ENCODE measurements at regions of chr11 and their contacts with region 1.

Region 1: DNA sequence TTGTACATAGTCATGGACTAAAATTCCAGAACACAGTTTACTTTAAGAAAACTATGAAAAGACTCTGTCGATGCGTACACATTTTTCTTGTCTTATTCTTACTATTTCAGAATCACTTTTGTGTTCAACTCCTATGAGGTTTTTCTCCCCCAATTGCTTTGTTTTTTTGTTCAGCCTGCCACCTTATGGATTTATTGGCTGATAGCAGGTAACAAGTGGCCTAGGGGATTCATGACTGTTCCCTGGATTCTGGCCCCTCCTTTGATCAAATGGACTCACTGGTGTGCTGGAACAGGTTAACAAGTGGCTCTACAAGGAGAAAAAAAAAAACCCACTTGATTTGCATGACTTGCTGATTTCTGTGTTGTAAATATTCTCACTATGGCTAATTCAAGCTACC is 10.6 kb downstream of the MMP20 start:
- DNase-seq: no peak
- H3K4me3 Mint-ChIP-seq: no peak overlapping the region
- H3K27ac Mint-ChIP-seq: no peak overlapping the region
- H3K4me1 Mint-ChIP-seq: peaks cover 13% of the 10 kb centered on the region
- H3K27me3 Mint-ChIP-seq: no peaks in the 10 kb centered on the region

Region 2: DNA sequence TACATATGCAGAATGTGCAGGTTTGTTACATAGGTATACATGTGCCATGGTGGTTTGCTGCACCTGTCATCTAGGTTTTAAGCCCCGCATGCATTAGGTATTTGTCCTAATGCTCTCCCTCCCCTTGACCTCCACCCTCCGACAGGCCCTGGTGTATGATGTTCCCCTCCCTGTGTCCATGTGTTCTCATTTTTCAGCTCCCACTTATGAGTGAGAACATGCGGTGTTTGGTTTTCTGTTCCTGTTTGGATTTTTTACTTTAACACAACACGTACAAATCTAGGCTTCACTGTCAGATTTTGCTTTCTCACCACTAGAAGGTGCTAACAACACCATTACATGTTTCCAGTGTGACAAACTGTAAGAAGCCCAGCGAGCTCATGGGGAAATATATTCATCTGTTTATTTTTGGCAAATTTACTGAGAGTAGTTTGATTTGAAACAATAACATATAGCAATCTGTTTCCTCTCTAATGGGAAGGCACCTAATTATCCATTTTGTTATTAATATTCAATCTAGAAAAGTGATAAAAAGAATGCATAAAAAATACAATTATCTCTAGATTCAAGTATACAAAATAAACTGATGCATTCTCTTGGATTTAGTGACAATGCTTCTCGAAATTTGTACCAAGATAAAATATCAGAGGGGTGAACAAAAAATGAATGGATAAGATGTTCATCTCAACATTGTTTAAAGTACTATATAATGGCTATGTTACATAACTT is 320.4 kb before region 1 on chr11:
- CTCF ChIA-PET with region 1: interaction called, 18 read pairs
- intact Hi-C with region 1: no loop called
- DNase-seq: peak; percentile 35
- H3K4me3 Mint-ChIP-seq: peak overlapping the region; percentile 74
- H3K27ac Mint-ChIP-seq: peak overlapping the region; percentile 85
- H3K4me1 Mint-ChIP-seq: peaks cover 21% of the 10 kb centered on the region
- H3K27me3 Mint-ChIP-seq: no peaks in the 10 kb centered on the region

Region 3: GRCh38 chr11:102367364-102367763 is 247.1 kb before region 1 on chr11:
- CTCF ChIA-PET with region 1: interaction called, 5 read pairs
- intact Hi-C with region 1: loop called (anchors 1 kb)
- DNase-seq: no peak
- H3K4me3 Mint-ChIP-seq: no peak overlapping the region
- H3K27ac Mint-ChIP-seq: peak overlapping the region; percentile 1
- H3K4me1 Mint-ChIP-seq: peaks cover 34% of the 10 kb centered on the region
- H3K27me3 Mint-ChIP-seq: no peaks in the 10 kb centered on the region

Region 4: GRCh38 chr11:102513869-102514268 is 100.6 kb before region 1 on chr11:
- CTCF ChIA-PET with region 1: interaction called, 11 read pairs
- intact Hi-C with region 1: no loop called
- DNase-seq: no peak
- H3K4me3 Mint-ChIP-seq: no peak overlapping the region
- H3K27ac Mint-ChIP-seq: no peak overlapping the region
- H3K4me1 Mint-ChIP-seq: no peaks in the 10 kb centered on the region
- H3K27me3 Mint-ChIP-seq: no peaks in the 10 kb centered on the region

Region 5: GRCh38 chr11:102592634-102593581 is 21.6 kb before region 1 on chr11:
- CTCF ChIA-PET with region 1: interaction called, 12 read pairs
- intact Hi-C with region 1: no loop called
- DNase-seq: no peak
- H3K4me3 Mint-ChIP-seq: no peak overlapping the region
- H3K27ac Mint-ChIP-seq: no peak overlapping the region
- H3K4me1 Mint-ChIP-seq: peaks cover 19% of the 10 kb centered on the region
- H3K27me3 Mint-ChIP-seq: no peaks in the 10 kb centered on the region

Region 6: DNA sequence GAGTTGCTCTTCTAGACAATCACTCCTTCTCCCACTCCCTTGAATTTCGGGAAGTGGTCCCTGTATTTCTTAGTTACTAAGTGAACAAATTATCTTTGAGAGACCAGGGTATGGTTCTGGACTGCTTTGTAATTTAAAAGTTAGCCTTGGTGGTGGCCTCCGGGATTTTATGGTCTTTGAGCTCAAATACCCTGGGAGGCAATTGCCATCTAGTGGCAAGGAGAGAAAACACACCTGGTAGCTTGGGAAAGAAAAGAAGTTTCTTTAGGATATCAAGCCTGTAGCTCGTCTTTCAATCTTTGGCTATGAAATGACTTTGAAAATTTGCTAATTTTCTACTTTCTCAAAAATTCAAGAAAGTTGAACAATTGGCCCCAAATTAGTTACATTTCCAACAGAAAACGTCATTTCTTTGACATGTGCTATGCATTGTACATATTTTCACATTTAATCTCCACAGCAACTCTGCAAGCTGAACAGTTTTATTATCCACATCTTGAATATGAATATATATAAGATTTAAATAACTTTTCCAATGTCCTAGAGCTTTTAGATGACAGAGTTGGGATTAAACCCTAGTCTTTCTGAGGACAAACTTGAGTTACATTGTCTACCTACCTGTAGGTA is 52.0 kb after region 1 on chr11:
- CTCF ChIA-PET with region 1: interaction called, 23 read pairs
- intact Hi-C with region 1: loop called (anchors 1 kb)
- DNase-seq: peak; percentile 28
- H3K4me3 Mint-ChIP-seq: no peak overlapping the region
- H3K27ac Mint-ChIP-seq: no peak overlapping the region
- H3K4me1 Mint-ChIP-seq: no peaks in the 10 kb centered on the region
- H3K27me3 Mint-ChIP-seq: no peaks in the 10 kb centered on the region